ENCODE measurements at regions of chr20 and their contacts with region 1.

Region 1: DNA sequence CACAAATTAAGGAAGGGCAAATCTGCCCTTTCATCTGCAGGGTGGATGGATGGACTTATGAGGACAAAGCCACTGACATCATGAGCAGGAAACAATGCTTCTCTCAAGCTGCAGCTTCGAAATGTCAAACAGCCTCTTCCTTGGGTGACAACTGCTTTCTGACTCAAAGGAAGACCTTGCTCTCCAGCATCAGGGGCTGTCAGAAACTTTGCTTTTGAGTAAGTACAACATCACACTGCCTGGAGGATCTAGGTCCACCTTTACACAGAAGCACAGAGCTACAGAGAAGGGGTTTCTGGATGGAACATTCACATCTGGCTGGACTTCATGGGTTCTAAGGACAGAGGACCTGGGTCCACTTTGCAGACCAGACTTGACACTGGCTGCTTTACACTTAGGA is 5.9 kb downstream of the CST1 start:
- DNase-seq: peak; percentile 19
- H3K4me3 ChIP-seq: no peak overlapping the region
- H3K27ac ChIP-seq: no peak overlapping the region
- H3K4me1 ChIP-seq: peaks cover 14% of the 10 kb centered on the region
- H3K27me3 ChIP-seq: no peaks in the 10 kb centered on the region
- CTCF ChIP-seq: no peak
- POLR2A ChIP-seq: no peak

Region 2: GRCh38 chr20:23889775-23890211 is 145.0 kb after region 1 on chr20:
- CTCF ChIA-PET with region 1: no interaction called
- POLR2A ChIA-PET with region 1: no interaction called
- dilution Hi-C with region 1: no loop called
- intact Hi-C with region 1: loop called (anchors 10 kb)
- DNase-seq: peak; percentile 42
- H3K4me3 ChIP-seq: no peak overlapping the region
- H3K27ac ChIP-seq: no peak overlapping the region
- H3K4me1 ChIP-seq: no peaks in the 10 kb centered on the region
- H3K27me3 ChIP-seq: no peaks in the 10 kb centered on the region
- CTCF ChIP-seq: peak; percentile 63 to 73
- POLR2A ChIP-seq: no peak

Measured in endothelial cell of umbilical vein (primary cell).